ENCODE measurements at regions of chr12 and their contacts with region 1.

Region 1: DNA sequence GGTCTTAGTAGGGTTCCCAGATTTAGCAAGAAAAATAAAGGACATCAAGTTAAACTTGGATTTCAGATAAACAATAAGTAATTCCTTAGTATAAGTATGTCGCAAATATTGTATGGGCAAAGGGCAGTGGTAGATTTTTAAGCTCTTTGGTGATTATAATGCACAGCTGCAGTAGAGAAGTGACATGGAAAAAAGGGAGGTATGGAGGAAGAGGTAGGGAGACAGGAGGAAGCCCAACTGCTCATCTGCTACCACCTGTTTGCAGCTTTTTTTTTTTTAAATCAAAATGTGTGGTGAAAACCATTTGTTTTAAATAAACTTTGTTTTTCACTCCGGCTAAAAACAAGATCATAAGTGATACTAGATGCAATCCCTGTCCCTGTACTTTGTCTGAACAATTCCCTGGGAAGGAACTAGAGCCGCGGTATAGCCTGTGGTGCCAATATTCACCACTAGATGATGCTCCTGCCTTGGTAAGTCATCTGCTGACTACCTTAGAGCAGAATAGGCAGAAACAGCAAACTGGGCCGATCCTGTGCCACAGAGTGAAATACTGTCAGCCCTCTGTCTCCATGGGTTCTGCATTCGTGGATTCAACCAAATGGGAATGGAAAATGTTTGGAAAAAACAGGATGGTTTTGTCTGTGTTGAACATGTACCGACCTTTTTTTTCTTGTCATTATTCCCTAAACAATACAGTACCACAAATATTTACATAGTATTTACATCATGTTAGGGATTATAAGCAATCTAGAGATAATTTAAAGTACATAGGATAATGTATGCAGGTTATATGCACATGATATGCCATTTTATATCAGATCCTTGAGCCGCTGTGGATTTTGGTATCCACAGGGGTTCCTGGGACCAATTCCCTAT is 62.4 kb upstream of the PLBD1 start:
- DNase-seq: peak; percentile 51
- CTCF ChIP-seq: peak; percentile 96

Region 2: DNA sequence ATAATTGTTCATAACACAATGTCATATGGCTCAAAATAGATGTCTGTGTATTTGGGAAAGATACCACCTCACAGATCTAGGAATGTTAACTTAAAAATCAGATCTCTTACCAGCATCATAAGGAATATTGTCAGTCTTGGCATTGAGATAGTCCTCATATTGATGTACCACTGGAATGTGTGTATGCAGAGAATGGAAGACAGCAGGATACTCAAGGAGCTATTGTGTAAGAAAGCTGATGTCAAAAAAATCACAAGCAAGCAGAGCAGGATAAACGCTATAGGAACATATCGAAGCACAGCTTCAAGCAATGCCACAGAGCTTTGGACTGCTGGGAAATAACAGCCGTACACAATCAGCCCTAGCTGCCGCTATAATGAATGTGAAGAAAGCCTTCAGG is 603.5 kb before region 1 on chr12:
- in situ Hi-C with region 1: no loop called
- DNase-seq: no peak
- CTCF ChIP-seq: no peak

Region 3: GRCh38 chr12:14239350-14239934 is 390.6 kb before region 1 on chr12:
- in situ Hi-C with region 1: loop called (anchors 25 kb)
- DNase-seq: peak; percentile 52
- CTCF ChIP-seq: peak; percentile 10